ENCODE measurements at regions of chr1 and their contacts with region 1.

Region 1: GRCh38 chr1:28581536-28582247 is 10.4 kb upstream of the RAB42 start:
- DNase-seq: peak; percentile 79 to 99
- H3K4me3 ChIP-seq: peak overlapping the region; percentile 86 to 97 (median 92)
- H3K27ac ChIP-seq: peak overlapping the region; percentile 30; the same call in 1 of the 2 replicates
- H3K4me1 ChIP-seq: peaks cover 0 to 11% (median 6%) of the 10 kb centered on the region in 4 experiments; a peak in 4 of 7 replicates
- H3K27me3 ChIP-seq: peaks cover 0 to 4% (median 2%) of the 10 kb centered on the region in 4 experiments; a peak in 2 of 7 replicates
- CTCF ChIP-seq: no peak
- EP300 ChIP-seq: no peak
- POLR2A ChIP-seq: peak; percentile 100
- RAD21 ChIP-seq: peak in 1 of 2 experiments; percentile 3; a peak in 1 of 4 replicates

Region 2: DNA sequence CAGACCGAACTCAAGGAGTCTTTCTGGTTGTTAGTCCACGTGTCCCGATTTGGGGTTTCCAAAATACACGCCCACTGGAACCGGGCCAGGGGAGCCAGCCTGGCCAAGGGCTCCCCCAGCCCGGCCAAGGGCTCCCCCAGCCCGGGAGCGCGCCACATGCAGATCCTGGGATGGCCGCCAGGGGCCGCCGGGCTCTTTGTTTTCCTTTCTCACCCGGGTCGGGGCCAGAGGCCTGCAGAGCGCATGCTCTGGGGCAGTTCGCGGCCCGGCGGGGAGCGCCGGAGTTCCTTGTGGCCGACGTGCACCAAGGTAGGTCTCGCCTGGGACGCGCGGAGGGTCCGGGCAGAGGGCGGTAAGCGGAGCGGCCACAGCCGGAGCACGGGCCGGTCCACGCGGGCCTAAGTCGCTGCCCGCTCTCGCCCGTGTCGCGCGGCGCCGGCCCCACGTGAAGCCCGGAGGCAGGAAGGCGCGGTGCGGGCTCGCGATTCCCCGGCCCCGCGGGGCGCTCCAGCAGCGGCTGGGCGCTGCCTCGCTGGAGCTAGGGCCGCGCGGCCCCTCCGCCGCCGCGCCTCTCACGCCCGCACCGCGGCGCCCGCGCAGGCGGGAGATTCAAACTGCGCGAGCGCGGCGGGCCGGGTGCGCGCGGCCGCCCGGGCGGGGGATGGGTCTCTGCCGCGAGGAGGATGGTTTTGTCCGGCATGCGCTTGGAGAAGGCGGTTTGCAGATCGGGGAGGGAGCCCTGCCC is 63.5 kb before region 1 on chr1:
- CTCF ChIA-PET with region 1: interaction called, 17 read pairs
- POLR2A ChIA-PET with region 1: interaction called, 660 read pairs
- DNase-seq: peak in 1 of 2 experiments; percentile 98
- H3K4me3 ChIP-seq: peak overlapping the region; percentile 66 to 83 (median 78)
- H3K27ac ChIP-seq: peak overlapping the region; percentile 95
- H3K4me1 ChIP-seq: peaks cover 7 to 16% (median 11%) of the 10 kb centered on the region in 4 experiments
- H3K27me3 ChIP-seq: no peaks in the 10 kb centered on the region
- CTCF ChIP-seq: peak; percentile 73 to 91 (median 88)
- EP300 ChIP-seq: peak in 1 of 2 experiments; percentile 43; a peak in 1 of 3 replicates
- POLR2A ChIP-seq: peak; percentile 82 to 84; a peak in 2 of 3 replicates
- RAD21 ChIP-seq: peak; percentile 75 to 87

Region 3: DNA sequence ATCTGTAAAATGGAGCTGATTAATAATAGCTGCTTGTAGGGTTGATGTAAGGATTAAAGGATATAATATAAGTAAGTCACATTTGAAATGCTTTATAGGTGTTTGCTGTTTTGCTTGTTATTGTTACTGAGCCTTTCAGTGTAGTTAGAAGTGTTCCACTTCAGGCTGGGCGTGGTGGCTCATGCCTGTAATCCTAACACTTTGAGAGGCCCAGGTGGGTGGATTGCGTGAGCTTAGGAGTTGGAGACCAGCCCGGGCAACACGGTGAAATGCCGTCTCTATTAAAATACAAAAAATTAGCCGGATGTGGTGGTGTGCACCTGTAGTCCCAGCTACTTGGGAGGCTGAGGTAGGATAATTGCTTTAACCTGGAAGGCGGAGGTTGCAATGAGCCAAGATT is 16.7 kb before region 1 on chr1:
- CTCF ChIA-PET with region 1: interaction called, 10 read pairs
- POLR2A ChIA-PET with region 1: interaction called, 552 read pairs
- DNase-seq: no peak
- H3K4me3 ChIP-seq: no peak overlapping the region
- H3K27ac ChIP-seq: no peak overlapping the region
- H3K4me1 ChIP-seq: no peaks in the 10 kb centered on the region
- H3K27me3 ChIP-seq: no peaks in the 10 kb centered on the region
- CTCF ChIP-seq: no peak
- EP300 ChIP-seq: no peak
- POLR2A ChIP-seq: no peak
- RAD21 ChIP-seq: no peak

Region 4: GRCh38 chr1:28631713-28632112 is 50.0 kb after region 1 on chr1:
- CTCF ChIA-PET with region 1: interaction called, 3 read pairs
- POLR2A ChIA-PET with region 1: interaction called, 13 read pairs
- DNase-seq: no peak
- H3K4me3 ChIP-seq: no peak overlapping the region
- H3K27ac ChIP-seq: no peak overlapping the region
- H3K4me1 ChIP-seq: no peaks in the 10 kb centered on the region
- H3K27me3 ChIP-seq: no peaks in the 10 kb centered on the region
- CTCF ChIP-seq: no peak
- EP300 ChIP-seq: no peak
- POLR2A ChIP-seq: no peak
- RAD21 ChIP-seq: no peak

Region 5: DNA sequence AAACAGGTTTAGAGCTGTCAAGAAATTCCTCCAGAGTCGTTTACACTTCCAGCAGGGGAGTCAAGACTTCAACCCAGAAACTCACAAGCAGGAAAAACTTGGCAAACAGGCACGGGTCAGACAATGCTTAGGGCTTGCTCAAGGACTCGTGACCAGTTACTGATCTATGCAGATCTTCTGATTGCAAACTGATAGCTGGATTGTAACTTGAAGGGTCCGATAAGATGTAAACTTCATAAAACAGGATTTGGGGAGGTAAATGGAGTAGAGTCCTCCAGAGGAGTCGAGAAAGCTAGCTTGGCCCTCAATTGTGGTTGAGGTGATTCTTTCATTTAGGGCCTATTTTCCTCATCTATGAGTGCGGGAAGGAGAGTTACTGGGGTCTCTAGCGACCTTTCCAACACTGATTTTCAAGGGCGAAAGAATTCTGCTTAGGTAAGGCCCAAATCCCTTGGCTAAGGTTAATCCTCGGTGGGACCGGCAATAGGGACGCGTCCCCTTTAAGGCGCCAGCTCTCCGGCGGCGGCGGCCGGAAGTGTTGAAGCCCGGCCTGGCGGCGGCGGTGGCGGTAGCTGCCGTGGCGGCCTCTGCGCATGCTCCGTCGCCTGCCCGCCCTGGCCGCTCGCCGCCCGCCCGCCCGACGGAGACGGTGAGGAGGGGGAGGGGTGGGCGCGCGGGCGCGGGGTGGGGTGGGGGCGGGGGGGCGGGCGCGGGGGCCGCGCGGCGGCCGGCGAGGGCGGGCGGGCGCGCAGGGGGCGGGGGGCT is 86.7 kb after region 1 on chr1 and contains the start of gene GMEB1:
- CTCF ChIA-PET with region 1: no interaction called
- POLR2A ChIA-PET with region 1: interaction called, 10 read pairs
- DNase-seq: peak in 1 of 2 experiments; percentile 83
- H3K4me3 ChIP-seq: peak within 1 kb of the TSS; percentile 77 to 94 (median 79)
- H3K27ac ChIP-seq: peak within 1 kb of the TSS; percentile 87
- H3K4me1 ChIP-seq: peaks cover 4 to 15% (median 7%) of the 10 kb centered on the region in 4 experiments; a peak in 5 of 7 replicates
- H3K27me3 ChIP-seq: no peaks in the 10 kb centered on the region
- CTCF ChIP-seq: no peak
- EP300 ChIP-seq: no peak
- POLR2A ChIP-seq: peak in 1 of 2 experiments; percentile 23; a peak in 1 of 3 replicates
- RAD21 ChIP-seq: no peak
- total RNA-seq, gene GMEB1: 26.2 and 28.1 TPM in 2 replicates

Measured in H1 (cell line).